Dorsolateral prefrontal cortex (tissue), 120 donors: ENCODE measurements at regions of chr19 and their contacts with region 1.

Region 1: DNA sequence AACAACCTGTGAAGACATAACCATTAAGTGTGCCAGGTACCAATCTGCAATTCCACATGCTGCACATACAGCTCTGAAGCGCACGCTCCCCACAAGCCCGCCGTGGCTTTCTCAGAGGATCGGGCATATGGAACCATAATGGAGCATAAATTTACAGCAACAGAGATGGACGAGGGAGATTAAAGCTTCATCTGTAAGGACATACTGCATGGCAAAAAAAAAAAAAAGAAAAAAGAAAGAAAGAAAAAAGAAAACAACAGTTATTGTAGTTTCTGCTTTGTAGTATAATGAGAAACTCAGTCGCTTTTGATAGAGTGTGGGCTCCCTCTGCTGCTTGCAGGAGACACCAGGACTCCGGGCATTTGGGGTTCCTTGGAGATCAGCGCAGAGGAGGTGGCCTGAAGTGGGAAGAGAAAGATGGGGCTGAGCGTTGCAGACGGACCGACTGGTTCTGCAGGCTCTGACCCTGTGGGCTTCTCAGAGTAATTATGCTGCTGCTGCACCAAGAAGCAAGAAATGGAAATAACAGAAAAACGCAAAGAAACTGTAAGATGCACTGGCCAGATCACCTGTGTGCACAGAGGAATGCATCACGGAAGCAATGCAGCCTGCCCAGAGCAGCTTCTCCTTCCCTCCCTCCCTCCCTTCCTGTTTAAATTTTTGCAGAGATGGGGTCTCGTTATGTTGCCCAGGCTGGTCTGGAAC is 10.8 kb upstream of the PDCD5 start:
- DNase-seq: peak in 9 of 10 donors; percentile 40 to 79 (median 66)
- H3K4me3 ChIP-seq: peak overlapping the region in 15 of 59 donors; percentile 10 to 42 (median 16)
- H3K27ac ChIP-seq: no peak overlapping the region
- H3K27me3 ChIP-seq: peaks cover 0 to 7% (median 0%) of the 10 kb centered on the region in 45 donors
- CTCF ChIP-seq: peak; percentile 32 to 87 (median 74)

Region 2: GRCh38 chr19:30669329-30670010 is 1900.8 kb before region 1 on chr19:
- intact Hi-C with region 1: loop called (anchors 5 to 10 kb)
- DNase-seq: peak in 9 of 10 donors; percentile 76 to 85 (median 80)
- H3K4me3 ChIP-seq: peak overlapping the region in 46 of 59 donors; percentile 4 to 52 (median 30)
- H3K27ac ChIP-seq: peak overlapping the region in 6 of 59 donors; percentile 6 to 46 (median 20)
- H3K27me3 ChIP-seq: peaks cover 0 to 10% (median 0%) of the 10 kb centered on the region in 45 donors
- CTCF ChIP-seq: peak; percentile 61 to 92 (median 85)

Region 3: GRCh38 chr19:32287811-32288227 is 282.4 kb before region 1 on chr19:
- intact Hi-C with region 1: loop called in 1 of 2 experiments (anchors 2 kb)
- DNase-seq: peak; percentile 12 to 70 (median 52)
- H3K4me3 ChIP-seq: no peak overlapping the region
- H3K27ac ChIP-seq: no peak overlapping the region
- H3K27me3 ChIP-seq: peaks cover 0 to 13% (median 0%) of the 10 kb centered on the region in 45 donors
- CTCF ChIP-seq: peak in 53 of 56 donors; percentile 9 to 70 (median 43)

Region 4: GRCh38 chr19:32339988-32340874 is 230.0 kb before region 1 on chr19:
- intact Hi-C with region 1: loop called (anchors 2 to 5 kb)
- DNase-seq: peak in 9 of 10 donors; percentile 14 to 81 (median 66)
- H3K4me3 ChIP-seq: no peak overlapping the region
- H3K27ac ChIP-seq: peak overlapping the region in 2 of 59 donors; percentile 9 to 18
- H3K27me3 ChIP-seq: no peaks in the 10 kb centered on the region
- CTCF ChIP-seq: peak; percentile 24 to 82 (median 72)

Region 5: GRCh38 chr19:32532233-32532632 is 38.0 kb before region 1 on chr19:
- intact Hi-C with region 1: no loop called
- DNase-seq: no peak
- H3K4me3 ChIP-seq: no peak overlapping the region
- H3K27ac ChIP-seq: no peak overlapping the region
- H3K27me3 ChIP-seq: peaks cover 0 to 9% (median 0%) of the 10 kb centered on the region in 45 donors
- CTCF ChIP-seq: no peak